IMR-90 (cell line): ENCODE measurements at regions of chr7 and their contacts with region 1.

Region 1: GRCh38 chr7:20352573-20353304 is 22.0 kb downstream of the ITGB8 start:
- DNase-seq: peak; percentile 31
- ATAC-seq: peak; percentile 15; the same call in 1 of the 2 replicates
- H3K4me3 ChIP-seq: no peak overlapping the region
- H3K27ac ChIP-seq: no peak overlapping the region
- H3K4me1 ChIP-seq: peaks cover 6% of the 10 kb centered on the region; the same call in 1 of the 2 replicates
- H3K27me3 ChIP-seq: no peaks in the 10 kb centered on the region
- CTCF ChIP-seq: no peak
- POLR2A ChIP-seq: no peak
- RAD21 ChIP-seq: no peak

Region 2: GRCh38 chr7:20385126-20385525 is 32.4 kb after region 1 on chr7:
- CTCF ChIA-PET with region 1: no interaction called
- POLR2A ChIA-PET with region 1: no interaction called
- dilution Hi-C with region 1: no loop called
- in situ Hi-C with region 1: no loop called
- intact Hi-C with region 1: loop called (anchors 5 kb)
- DNase-seq: peak; percentile 89
- ATAC-seq: peak; percentile 97
- H3K4me3 ChIP-seq: no peak overlapping the region
- H3K27ac ChIP-seq: peak overlapping the region; percentile 54; the same call in 1 of the 2 replicates
- H3K4me1 ChIP-seq: peaks cover 2% of the 10 kb centered on the region
- H3K27me3 ChIP-seq: no peaks in the 10 kb centered on the region
- CTCF ChIP-seq: no peak
- POLR2A ChIP-seq: no peak
- RAD21 ChIP-seq: no peak